ENCODE measurements at regions of chr10 and their contacts with region 1.

Region 1: DNA sequence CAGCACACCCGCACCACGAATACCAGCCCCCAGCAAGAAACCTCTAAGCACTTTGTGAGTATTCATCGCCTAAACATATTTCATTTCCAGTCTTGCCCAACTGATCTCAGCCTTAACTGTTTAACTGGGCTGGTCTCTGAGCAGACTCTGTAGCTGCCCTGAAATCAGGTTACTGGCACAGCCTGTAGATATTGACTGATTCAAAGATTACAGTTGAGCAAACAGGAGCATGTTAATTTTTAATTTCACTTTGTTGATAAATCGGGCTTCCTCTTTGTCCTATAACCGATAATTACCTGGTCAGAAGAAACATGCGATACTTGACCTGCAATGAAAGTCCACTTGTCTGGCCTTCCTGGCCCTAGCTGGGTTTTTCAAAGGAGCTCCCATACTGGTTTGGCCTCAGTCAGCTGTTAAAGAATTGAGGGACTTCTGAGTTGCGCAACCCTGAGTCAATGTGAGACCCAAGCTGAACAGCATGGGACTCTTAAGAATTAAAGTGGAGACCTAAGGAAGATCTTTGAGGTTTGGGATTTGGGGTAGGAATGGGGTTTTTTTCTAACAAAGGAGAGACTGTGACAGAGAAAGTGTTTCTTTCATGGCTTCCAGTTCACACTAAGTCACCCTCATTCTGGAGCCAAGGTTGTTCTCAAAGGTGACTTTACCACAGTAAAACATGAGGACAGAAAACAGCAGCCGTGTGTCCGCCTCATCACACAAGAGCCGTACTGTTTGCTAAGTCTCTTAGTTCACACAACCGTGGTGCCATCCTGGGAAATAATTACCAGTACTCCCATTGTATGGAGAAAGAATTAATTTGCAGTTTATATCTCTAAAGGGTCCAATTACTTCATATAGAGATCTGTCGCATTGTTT is 75.9 kb downstream of the PPP1R3C start:
- DNase-seq: no peak
- H3K4me3 ChIP-seq: no peak overlapping the region
- H3K27ac ChIP-seq: peak overlapping the region in 1 of 4 donors; percentile 5
- H3K4me1 ChIP-seq: peaks cover 5 to 22% (median 17%) of the 10 kb centered on the region in 4 donors
- H3K27me3 ChIP-seq: no peaks in the 10 kb centered on the region
- CTCF ChIP-seq: no peak
- EP300 ChIP-seq: no peak
- POLR2A ChIP-seq: no peak

Region 2: GRCh38 chr10:91797874-91798648 is 241.1 kb after region 1 on chr10 and contains the start of gene TNKS2:
- intact Hi-C with region 1: loop called (anchors 5 kb)
- DNase-seq: peak; percentile 98
- H3K4me3 ChIP-seq: peak within 1 kb of the TSS; percentile 84 to 97 (median 94)
- H3K27ac ChIP-seq: peak within 1 kb of the TSS; percentile 99 to 100 (median 99)
- H3K4me1 ChIP-seq: peaks cover 30 to 58% (median 53%) of the 10 kb centered on the region in 4 donors
- H3K27me3 ChIP-seq: no peaks in the 10 kb centered on the region
- CTCF ChIP-seq: peak in 1 of 3 experiments; percentile 13
- EP300 ChIP-seq: no peak
- POLR2A ChIP-seq: peak; percentile 79
- total RNA-seq, gene TNKS2: 36.7 to 47.1 (median 43.2) TPM